ENCODE measurements at regions of chr7 and their contacts with region 1.

Region 1: DNA sequence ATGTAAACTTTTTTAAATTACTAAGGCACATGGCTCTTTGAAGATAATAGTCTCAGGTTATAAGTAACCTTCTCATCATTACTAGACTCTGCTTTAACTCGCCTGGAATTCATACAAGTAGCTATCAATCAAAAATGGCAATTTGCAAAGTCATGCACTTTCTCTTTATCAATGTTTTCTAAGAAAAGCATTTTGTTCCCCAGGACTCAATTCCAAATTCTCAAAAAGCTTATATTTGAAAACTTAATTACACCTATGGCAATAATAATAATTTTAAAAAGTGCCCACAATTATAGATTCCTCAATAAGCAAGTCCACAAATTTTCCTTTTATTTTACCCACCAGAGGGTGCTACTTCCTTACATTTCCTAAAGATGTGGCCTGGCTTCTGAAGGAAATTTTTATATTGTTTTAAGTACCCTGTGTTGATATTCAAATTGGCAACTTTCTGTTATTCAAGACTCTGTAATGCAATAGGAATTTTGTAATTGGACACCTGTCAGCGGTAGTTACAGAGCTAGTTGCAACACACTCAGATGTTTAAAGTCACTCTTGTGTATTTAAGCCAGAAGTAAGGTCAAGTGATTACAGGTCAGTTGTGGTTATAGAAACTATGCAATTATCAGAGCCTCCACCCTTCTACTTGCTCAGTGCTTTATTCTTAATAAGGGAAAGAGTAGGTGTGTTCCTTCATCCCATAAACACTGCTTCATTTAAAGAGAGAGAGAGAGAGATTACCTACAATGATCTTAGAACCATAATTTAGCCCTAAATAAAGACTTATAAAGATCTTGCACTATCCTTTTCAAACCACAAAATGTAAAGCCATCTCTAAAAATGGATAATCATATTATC is 47.1 kb upstream of the HYAL4 start:
- DNase-seq: peak; percentile 40
- H3K4me3 ChIP-seq: no peak overlapping the region
- H3K27ac ChIP-seq: no peak overlapping the region
- H3K4me1 ChIP-seq: no peaks in the 10 kb centered on the region
- H3K27me3 ChIP-seq: no peaks in the 10 kb centered on the region
- CTCF ChIP-seq: peak; percentile 84
- EP300 ChIP-seq: no peak
- RAD21 ChIP-seq: peak; percentile 91

Region 2: DNA sequence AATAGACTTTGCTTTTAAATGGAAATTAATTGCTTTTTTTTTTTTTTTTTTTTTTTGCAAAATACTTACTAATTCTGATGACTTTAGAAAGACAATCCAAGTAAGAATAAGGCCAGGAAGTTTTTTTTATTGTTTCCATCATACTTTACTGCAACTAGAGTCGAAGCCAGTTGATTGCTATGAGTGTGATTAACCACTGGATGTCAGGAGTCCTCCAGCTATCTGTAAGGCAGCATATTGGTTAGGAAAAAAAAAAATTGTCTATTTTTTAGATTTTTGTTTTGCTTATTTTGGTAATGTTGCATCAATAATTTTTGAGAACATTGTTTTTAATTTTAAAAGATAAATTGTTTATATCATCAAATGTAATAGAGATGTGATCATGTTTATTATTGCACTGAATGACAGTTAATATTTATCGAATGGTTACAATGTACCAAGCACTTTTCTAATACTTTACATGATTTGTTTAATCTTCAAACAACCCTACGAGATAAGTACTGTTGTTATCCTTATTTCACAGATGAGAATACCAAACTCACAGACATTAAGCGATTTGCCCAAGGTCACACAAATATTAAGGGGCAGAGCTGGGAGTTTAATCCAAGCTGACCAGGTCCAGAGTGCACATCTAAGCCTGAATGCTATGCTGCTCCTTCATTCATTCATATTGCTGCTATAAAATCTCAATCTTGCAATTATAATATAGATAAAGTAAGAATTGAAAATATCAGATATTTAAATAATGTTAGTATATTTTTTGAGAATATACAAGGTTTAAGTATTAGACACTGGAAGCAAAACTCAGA is 162.1 kb before region 1 on chr7:
- CTCF ChIA-PET with region 1: interaction called, 24 read pairs
- POLR2A ChIA-PET with region 1: no interaction called
- DNase-seq: peak; percentile 72
- H3K4me3 ChIP-seq: no peak overlapping the region; a peak in 1 of 4 replicates
- H3K27ac ChIP-seq: no peak overlapping the region
- H3K4me1 ChIP-seq: peaks cover 3 to 4% of the 10 kb centered on the region in 2 experiments; a peak in 2 of 4 replicates
- H3K27me3 ChIP-seq: no peaks in the 10 kb centered on the region
- CTCF ChIP-seq: peak; percentile 92
- EP300 ChIP-seq: no peak
- RAD21 ChIP-seq: peak; percentile 98

Region 3: DNA sequence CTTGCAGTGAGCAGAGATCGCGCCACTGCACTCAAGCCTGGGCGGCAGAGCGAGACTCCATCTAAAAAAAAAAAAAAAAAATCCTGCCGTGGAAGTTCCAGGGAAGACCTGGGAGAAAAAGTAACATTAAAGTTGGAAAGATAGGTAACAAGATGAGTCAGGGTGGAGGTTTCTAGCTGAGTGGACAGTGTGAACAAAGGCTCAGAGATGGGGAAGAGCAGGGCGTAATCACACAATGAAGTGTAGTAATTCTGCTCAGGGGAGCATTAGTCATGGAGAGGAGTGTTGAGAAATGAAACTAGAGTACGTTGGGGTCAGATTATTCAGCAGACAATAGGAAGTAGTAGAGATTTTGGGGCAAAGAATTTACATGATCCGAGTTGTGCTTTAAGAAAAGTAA is 27.5 kb before region 1 on chr7:
- CTCF ChIA-PET with region 1: interaction called, 22 read pairs
- POLR2A ChIA-PET with region 1: no interaction called
- DNase-seq: no peak
- H3K4me3 ChIP-seq: no peak overlapping the region
- H3K27ac ChIP-seq: no peak overlapping the region
- H3K4me1 ChIP-seq: no peaks in the 10 kb centered on the region; a peak in 1 of 4 replicates
- H3K27me3 ChIP-seq: no peaks in the 10 kb centered on the region
- CTCF ChIP-seq: no peak
- EP300 ChIP-seq: no peak
- RAD21 ChIP-seq: no peak

Region 4: GRCh38 chr7:123816916-123817315 is 19.0 kb after region 1 on chr7:
- CTCF ChIA-PET with region 1: interaction called, 16 read pairs
- POLR2A ChIA-PET with region 1: no interaction called
- DNase-seq: no peak
- H3K4me3 ChIP-seq: no peak overlapping the region
- H3K27ac ChIP-seq: no peak overlapping the region
- H3K4me1 ChIP-seq: no peaks in the 10 kb centered on the region
- H3K27me3 ChIP-seq: no peaks in the 10 kb centered on the region
- CTCF ChIP-seq: no peak
- EP300 ChIP-seq: no peak
- RAD21 ChIP-seq: no peak

Region 5: DNA sequence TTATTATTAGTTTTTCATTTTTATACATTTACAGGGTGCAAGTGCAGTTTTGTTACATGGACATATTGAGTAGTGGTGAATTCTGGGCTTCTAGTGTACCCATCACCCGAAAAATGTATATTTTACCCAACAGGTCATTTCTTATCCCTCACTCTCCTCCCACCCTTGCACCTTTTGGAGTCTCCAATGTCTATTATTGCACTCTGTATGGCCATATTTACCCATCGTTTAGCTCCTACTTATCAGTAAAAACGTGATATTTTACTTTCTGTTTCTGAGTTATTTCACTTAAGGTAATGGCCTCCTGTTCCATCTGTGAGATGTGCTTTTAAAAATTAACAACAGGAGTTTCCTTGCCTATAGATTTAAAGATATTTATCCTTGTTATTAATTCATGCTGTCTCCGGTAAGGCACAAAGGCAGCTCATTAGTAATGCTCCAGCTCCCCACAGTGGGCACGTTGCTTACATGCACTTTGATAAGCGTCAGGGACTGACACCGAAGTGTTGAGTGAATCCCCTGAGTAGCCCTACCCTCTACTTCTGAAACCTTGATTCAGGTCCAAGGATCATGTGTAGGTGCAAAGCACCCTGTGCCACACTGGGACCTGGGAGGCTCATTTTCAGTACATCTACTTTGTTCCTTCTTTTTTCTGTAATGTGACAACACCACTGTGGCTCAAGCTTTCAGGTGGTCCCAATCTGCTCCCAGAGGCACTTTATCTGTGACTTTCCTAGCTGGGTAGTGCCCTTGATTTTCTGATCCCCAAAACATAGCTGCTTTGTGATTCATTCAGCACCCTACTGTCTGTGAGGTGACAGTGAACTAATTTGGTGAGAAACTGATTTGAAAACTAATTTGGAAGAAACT is 74.3 kb after region 1 on chr7:
- CTCF ChIA-PET with region 1: interaction called, 127 read pairs
- POLR2A ChIA-PET with region 1: no interaction called
- DNase-seq: peak; percentile 61
- H3K4me3 ChIP-seq: no peak overlapping the region
- H3K27ac ChIP-seq: no peak overlapping the region
- H3K4me1 ChIP-seq: peaks cover 0 to 14% of the 10 kb centered on the region in 2 experiments; a peak in 2 of 4 replicates
- H3K27me3 ChIP-seq: no peaks in the 10 kb centered on the region; the same call in 1 of the 2 replicates
- CTCF ChIP-seq: peak; percentile 58
- EP300 ChIP-seq: no peak; a peak in 1 of 4 replicates
- RAD21 ChIP-seq: peak; percentile 93

Region 6: GRCh38 chr7:123916240-123916724 is 118.4 kb after region 1 on chr7:
- CTCF ChIA-PET with region 1: interaction called, 14 read pairs
- POLR2A ChIA-PET with region 1: no interaction called
- DNase-seq: peak; percentile 47
- H3K4me3 ChIP-seq: no peak overlapping the region
- H3K27ac ChIP-seq: no peak overlapping the region
- H3K4me1 ChIP-seq: no peaks in the 10 kb centered on the region
- H3K27me3 ChIP-seq: no peaks in the 10 kb centered on the region
- CTCF ChIP-seq: peak; percentile 58
- EP300 ChIP-seq: no peak
- RAD21 ChIP-seq: peak; percentile 51

Region 7: DNA sequence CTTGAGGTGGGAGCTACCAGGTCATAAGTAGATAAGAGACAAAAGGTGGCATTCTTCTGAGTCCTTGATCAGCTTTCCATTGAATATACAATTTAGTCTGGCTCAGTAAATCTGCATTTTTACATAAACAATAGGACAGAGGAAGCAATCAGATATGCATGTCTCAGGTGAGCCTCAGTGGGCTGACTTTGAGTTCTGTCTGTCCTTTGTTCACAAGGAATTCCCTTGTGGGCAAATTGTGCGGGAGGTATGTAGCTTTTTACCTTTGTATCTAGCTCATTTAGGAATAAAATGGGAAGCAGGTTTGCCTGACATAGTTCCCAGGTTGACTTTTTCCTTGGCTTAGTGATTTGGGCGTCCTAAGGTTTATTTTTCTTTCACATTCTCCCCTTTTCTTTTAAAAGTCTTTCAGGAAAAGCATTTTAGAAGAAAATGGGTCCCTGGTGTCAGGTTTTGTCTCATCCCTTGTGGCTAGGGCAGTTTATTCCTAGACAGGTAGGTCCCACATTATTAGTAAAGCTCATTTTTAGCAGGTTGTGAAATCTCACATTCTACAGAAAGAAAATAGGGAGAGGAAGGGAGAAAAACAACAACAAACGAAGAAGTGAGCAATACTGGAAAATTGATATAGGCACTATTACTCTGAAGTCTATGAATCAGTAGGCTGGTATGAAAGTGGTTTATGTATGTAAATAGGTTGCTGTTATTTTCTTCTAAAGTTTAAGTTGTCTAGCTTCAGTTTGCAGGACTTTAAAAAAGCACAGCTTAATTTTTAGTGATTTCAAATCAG is 143.7 kb after region 1 on chr7:
- CTCF ChIA-PET with region 1: no interaction called
- POLR2A ChIA-PET with region 1: no interaction called
- DNase-seq: no peak
- H3K4me3 ChIP-seq: no peak overlapping the region
- H3K27ac ChIP-seq: no peak overlapping the region
- H3K4me1 ChIP-seq: no peaks in the 10 kb centered on the region; a peak in 2 of 4 replicates
- H3K27me3 ChIP-seq: no peaks in the 10 kb centered on the region
- CTCF ChIP-seq: no peak
- EP300 ChIP-seq: no peak
- RAD21 ChIP-seq: no peak

Region 8: DNA sequence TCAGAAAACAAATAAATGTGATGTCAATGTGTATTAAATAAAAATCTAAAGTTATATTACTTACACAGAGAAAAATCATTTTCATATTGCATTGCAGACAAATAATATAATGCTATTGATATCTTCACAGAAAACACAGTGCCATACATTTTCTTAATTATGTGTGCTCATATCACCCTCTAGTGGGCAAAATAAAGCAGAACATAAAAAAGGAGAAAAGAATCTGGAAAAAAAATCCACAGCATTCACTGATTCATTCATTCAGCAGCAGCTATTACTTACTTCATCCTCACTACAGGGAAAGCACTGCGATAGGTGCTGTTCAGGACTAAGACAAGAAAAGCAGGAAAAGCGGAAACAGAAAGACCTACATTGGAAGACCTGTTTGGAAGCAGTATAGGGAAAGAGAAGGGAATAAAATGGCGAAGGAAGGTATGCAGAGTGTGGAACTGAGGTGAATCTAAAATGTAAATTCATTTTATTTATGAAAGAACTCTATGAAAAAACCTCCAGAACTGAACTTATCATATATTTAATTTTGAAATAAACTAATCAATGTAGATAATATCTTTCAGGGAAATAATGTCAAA is 1058.5 kb after region 1 on chr7:
- CTCF ChIA-PET with region 1: interaction called, 12 read pairs
- POLR2A ChIA-PET with region 1: no interaction called
- DNase-seq: peak; percentile 37
- H3K4me3 ChIP-seq: no peak overlapping the region; a peak in 1 of 4 replicates
- H3K27ac ChIP-seq: peak overlapping the region in 1 of 2 experiments; percentile 51; a peak in 2 of 4 replicates
- H3K4me1 ChIP-seq: peaks cover 0 to 7% of the 10 kb centered on the region in 2 experiments; a peak in 1 of 4 replicates
- H3K27me3 ChIP-seq: no peaks in the 10 kb centered on the region
- CTCF ChIP-seq: peak; percentile 94
- EP300 ChIP-seq: no peak
- RAD21 ChIP-seq: peak; percentile 77